OCI-LY7 (cell line): ENCODE measurements at regions of chr7 and their contacts with region 1.

Region 1: DNA sequence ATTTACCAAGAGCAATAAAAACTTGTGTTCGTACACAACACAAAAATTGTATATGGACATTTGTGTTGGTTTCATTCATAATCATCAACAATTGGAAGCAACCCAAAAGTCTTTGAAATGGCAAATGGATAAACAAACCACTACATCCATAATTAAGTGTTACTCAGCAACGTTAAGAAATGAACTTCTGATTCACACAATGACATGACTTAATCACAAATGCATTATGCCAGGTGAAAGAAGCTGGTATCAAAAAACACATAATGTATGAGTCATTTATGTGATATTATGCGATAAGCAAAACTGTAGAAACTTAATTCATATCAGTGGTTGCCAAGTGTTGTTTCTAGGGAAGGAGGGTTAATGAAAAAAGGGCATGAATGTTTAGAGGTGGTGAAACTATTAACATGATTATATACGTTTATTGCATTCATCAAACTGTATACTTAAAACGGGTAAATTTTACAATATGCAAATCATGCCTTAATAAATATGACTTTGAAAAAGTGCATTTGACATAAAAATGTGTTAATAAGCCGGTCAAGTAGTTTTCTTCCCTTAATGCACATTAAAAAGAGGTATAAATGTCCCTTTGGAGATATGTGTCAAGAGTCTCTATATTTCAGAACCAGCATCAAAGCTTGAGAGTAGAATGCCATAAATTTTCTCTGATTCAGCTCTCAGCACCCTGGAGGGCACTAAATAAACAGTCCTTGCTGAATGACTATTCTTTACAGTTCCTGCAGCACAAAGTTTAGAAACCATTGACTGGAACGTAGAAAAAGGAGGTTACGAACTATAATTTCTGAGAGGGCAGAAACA is 84.8 kb upstream of the GRM3 start:
- DNase-seq: no peak
- H3K4me3 ChIP-seq: no peak overlapping the region
- H3K27ac ChIP-seq: no peak overlapping the region
- H3K4me1 ChIP-seq: no peaks in the 10 kb centered on the region
- CTCF ChIP-seq: no peak

Region 2: DNA sequence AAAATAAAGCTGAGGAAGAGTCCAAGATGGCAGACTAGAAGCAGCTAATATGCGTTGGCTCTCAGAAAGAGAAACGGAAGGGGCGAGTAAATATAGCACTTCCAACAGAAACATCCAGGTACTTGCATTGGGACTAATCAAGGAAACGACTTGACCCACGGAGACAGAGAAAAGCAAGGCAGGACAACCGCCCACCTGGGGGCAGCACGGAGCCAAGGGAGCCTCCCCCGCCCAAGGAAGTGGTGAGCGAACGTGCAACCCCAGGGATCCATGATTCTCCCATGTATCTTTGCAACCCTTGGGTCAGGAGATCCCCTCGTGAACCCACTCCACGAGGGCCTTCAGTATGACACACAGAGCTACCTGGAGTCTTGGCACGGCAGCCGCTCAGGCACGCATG is 39.4 kb after region 1 on chr7:
- CTCF ChIA-PET with region 1: no interaction called
- POLR2A ChIA-PET with region 1: no interaction called
- intact Hi-C with region 1: loop called (anchors 1 kb)
- DNase-seq: no peak
- H3K4me3 ChIP-seq: no peak overlapping the region
- H3K27ac ChIP-seq: no peak overlapping the region
- H3K4me1 ChIP-seq: no peaks in the 10 kb centered on the region
- CTCF ChIP-seq: no peak